Heart left ventricle (tissue), 16 donors: ENCODE measurements at regions of chr1 and their contacts with region 1.

Region 1: GRCh38 chr1:202315576-202316168 is 26.1 kb downstream of the UBE2T start:
- DNase-seq: peak; percentile 62 to 85 (median 69)
- ATAC-seq: peak in 3 of 4 donors; percentile 82 to 83 (median 83)
- H3K4me3 ChIP-seq: no peak overlapping the region
- H3K27ac ChIP-seq: no peak overlapping the region
- H3K4me1 ChIP-seq: peaks cover 0 to 8% (median 0%) of the 10 kb centered on the region in 12 donors
- H3K27me3 ChIP-seq: no peaks in the 10 kb centered on the region
- CTCF ChIP-seq: peak; percentile 75 to 90 (median 86)
- POLR2A ChIP-seq: no peak

Region 2: DNA sequence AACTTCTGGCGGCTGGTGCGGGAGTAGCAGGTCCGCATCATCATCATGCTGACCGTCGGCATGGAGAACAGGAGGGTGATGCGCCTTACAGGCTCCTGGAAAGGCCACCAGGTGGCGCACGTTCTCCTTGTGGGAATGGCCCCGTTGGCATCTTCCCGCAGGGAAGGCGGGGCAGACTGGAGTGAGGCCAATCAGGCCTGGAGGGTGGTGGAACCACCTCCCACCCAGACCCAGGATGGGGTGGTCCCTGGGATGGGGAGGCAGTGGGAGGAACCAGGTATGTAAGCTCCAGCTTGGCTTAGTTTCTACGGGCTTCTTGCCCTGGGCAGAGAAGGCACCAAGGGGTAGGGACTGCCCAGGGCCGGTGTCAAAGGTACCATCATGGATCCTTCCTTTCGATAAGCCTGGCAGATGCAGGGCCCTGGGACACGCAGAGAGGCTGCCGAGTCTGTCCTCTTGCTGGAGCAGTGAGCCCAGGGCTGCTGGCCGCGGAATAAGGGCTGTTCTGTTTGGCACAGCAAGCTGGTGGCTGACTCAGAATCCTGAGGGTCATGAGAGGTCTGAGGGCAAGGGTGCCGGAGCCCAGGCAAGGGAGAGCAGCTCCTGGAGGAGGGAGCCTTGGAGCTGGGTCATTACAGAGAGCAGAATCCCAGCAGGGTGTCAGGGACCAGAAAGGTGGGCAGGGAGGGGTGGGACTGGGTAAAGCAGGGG is 130.8 kb before region 1 on chr1:
- intact Hi-C with region 1: loop called in 4 of 10 experiments (anchors 2 to 5 kb)
- DNase-seq: peak; percentile 67 to 85 (median 78)
- ATAC-seq: peak; percentile 45 to 80 (median 64)
- H3K4me3 ChIP-seq: no peak overlapping the region
- H3K27ac ChIP-seq: no peak overlapping the region
- H3K4me1 ChIP-seq: peaks cover 0 to 8% (median 0%) of the 10 kb centered on the region in 12 donors
- H3K27me3 ChIP-seq: peaks cover 0 to 20% (median 0%) of the 10 kb centered on the region in 9 donors
- CTCF ChIP-seq: peak; percentile 66 to 87 (median 76)
- POLR2A ChIP-seq: no peak

Region 3: DNA sequence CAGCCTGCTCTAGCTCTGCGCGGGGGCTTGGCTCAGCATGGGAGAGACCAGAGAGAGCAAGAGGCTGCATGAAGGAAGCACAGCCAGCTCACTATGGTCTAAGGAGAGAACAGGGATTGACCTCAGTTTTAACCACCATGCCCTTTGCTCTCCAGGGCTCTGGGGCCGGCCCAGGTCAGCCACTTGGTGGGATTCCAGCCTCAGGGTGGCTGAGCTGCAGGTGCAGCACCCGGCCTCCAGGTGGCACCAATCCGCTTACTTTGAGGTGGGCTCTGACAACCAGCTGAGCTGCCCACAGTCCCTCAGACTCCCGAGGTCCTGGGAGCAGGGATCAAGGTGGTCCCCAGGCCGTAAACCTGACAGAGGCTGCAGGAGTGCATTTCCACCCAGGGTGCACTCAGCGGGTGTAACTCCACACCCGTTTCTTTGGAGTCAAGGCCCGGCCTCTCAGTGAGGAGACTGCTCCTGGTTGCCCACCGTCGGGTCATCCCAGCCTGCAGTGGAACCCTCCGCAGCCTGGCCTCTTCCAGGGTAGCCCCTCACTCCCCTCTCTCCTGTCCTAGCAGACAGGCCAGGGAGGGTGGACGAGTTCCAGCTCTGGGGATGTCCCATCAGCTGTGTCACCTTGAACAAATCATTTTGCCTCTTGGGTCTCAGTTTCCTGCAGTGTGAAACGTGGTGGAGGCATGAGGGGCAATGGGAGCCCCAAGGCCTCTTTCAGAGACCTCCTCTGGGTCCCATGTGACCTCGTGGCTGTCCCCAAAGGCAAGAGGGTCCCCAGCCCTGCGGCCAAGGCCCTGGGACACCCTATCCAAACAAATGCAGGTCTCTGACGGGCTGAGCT is 122.7 kb before region 1 on chr1:
- intact Hi-C with region 1: loop called in 9 of 10 experiments (anchors 1 to 5 kb)
- DNase-seq: peak in 4 of 5 donors; percentile 53 to 76 (median 66)
- ATAC-seq: peak; percentile 36 to 74 (median 60)
- H3K4me3 ChIP-seq: peak overlapping the region in 8 of 12 donors; percentile 16 to 47 (median 26)
- H3K27ac ChIP-seq: no peak overlapping the region
- H3K4me1 ChIP-seq: peaks cover 0 to 18% (median 6%) of the 10 kb centered on the region in 12 donors
- H3K27me3 ChIP-seq: peaks cover 6 to 31% (median 17%) of the 10 kb centered on the region in 9 donors
- CTCF ChIP-seq: peak; percentile 68 to 92 (median 84)
- POLR2A ChIP-seq: no peak

Region 4: DNA sequence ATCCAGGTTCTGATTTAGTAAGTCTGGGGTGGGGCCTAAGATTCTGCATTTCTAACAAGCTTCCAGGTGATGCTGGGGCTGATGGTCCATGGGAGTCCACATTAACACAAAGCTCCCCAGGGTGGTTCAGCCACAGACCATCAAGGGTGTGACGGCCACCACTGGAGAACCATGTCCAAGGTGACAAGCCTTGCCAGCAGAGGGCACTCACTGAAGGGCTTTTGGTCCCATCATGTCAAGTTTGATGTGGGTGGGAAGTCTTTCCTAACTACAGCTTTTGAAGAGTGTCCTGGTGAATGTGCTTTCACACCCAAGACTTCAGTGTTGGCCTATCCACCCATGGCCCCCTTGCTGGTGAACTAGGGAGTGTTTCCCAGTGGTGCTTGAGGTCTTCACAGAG is 41.1 kb before region 1 on chr1:
- intact Hi-C with region 1: loop called in 6 of 10 experiments (anchors 1 to 5 kb)
- DNase-seq: peak in 3 of 5 donors; percentile 36 to 49 (median 42)
- ATAC-seq: peak in 3 of 4 donors; percentile 24 to 64 (median 48)
- H3K4me3 ChIP-seq: no peak overlapping the region
- H3K27ac ChIP-seq: no peak overlapping the region
- H3K4me1 ChIP-seq: peaks cover 0 to 6% (median 0%) of the 10 kb centered on the region in 12 donors
- H3K27me3 ChIP-seq: peaks cover 0 to 7% (median 0%) of the 10 kb centered on the region in 9 donors
- CTCF ChIP-seq: peak in 10 of 12 donors; percentile 22 to 55 (median 36)
- POLR2A ChIP-seq: no peak

Region 5: GRCh38 chr1:202304375-202304774 is 11.3 kb before region 1 on chr1:
- intact Hi-C with region 1: no loop called
- DNase-seq: peak; percentile 43 to 71 (median 61)
- ATAC-seq: peak; percentile 52 to 77 (median 61)
- H3K4me3 ChIP-seq: no peak overlapping the region
- H3K27ac ChIP-seq: no peak overlapping the region
- H3K4me1 ChIP-seq: peaks cover 0 to 15% (median 0%) of the 10 kb centered on the region in 12 donors
- H3K27me3 ChIP-seq: no peaks in the 10 kb centered on the region
- CTCF ChIP-seq: no peak
- POLR2A ChIP-seq: no peak

Region 6: GRCh38 chr1:202716654-202717053 is 401.0 kb after region 1 on chr1:
- intact Hi-C with region 1: loop called in 2 of 10 experiments (anchors 5 to 10 kb)
- DNase-seq: no peak
- ATAC-seq: no peak
- H3K4me3 ChIP-seq: no peak overlapping the region
- H3K27ac ChIP-seq: no peak overlapping the region
- H3K4me1 ChIP-seq: peaks cover 0 to 3% (median 0%) of the 10 kb centered on the region in 12 donors
- H3K27me3 ChIP-seq: peaks cover 0 to 61% (median 0%) of the 10 kb centered on the region in 9 donors
- CTCF ChIP-seq: no peak
- POLR2A ChIP-seq: no peak